ENCODE measurements at regions of chr5 and their contacts with region 1.

Region 1: GRCh38 chr5:112921833-112922817 is at the start of gene REEP5:
- DNase-seq: peak; percentile 98
- H3K4me3 ChIP-seq: peak within 1 kb of the TSS; percentile 69 to 99 (median 95)
- H3K27ac ChIP-seq: peak within 1 kb of the TSS; percentile 93 to 99 (median 97)
- H3K4me1 ChIP-seq: peaks cover 23 to 91% (median 70%) of the 10 kb centered on the region in 6 donors
- H3K27me3 ChIP-seq: no peaks in the 10 kb centered on the region
- CTCF ChIP-seq: peak; percentile 55 to 96 (median 88)
- POLR2A ChIP-seq: peak in 2 of 3 donors; percentile 82 to 85
- total RNA-seq, gene REEP5: 56.1 to 84.8 (median 66.1) TPM

Region 2: GRCh38 chr5:112857866-112858265 is 64.3 kb before region 1 on chr5:
- intact Hi-C with region 1: loop called (anchors 10 kb)
- DNase-seq: no peak
- H3K4me3 ChIP-seq: no peak overlapping the region
- H3K27ac ChIP-seq: no peak overlapping the region
- H3K4me1 ChIP-seq: peaks cover 15 to 23% (median 18%) of the 10 kb centered on the region in 6 donors
- H3K27me3 ChIP-seq: peaks cover 0 to 15% (median 0%) of the 10 kb centered on the region in 7 donors
- CTCF ChIP-seq: no peak
- POLR2A ChIP-seq: no peak

Region 3: GRCh38 chr5:112976432-112977309 is 54.5 kb after region 1 on chr5 and contains the start of gene DCP2:
- intact Hi-C with region 1: loop called (anchors 10 kb)
- DNase-seq: peak; percentile 98
- H3K4me3 ChIP-seq: peak within 1 kb of the TSS; percentile 66 to 92 (median 80)
- H3K27ac ChIP-seq: peak within 1 kb of the TSS; percentile 74 to 99 (median 96)
- H3K4me1 ChIP-seq: peaks cover 28 to 51% (median 45%) of the 10 kb centered on the region in 6 donors
- H3K27me3 ChIP-seq: no peaks in the 10 kb centered on the region
- CTCF ChIP-seq: peak in 2 of 11 experiments; percentile 11 to 36
- POLR2A ChIP-seq: peak in 2 of 3 donors; percentile 20 to 75
- total RNA-seq, gene DCP2: 76.6 to 110 (median 80.8) TPM

Measured in spleen (tissue), 13 donors.